ENCODE measurements at regions of chr5 and their contacts with region 1.

Region 1: DNA sequence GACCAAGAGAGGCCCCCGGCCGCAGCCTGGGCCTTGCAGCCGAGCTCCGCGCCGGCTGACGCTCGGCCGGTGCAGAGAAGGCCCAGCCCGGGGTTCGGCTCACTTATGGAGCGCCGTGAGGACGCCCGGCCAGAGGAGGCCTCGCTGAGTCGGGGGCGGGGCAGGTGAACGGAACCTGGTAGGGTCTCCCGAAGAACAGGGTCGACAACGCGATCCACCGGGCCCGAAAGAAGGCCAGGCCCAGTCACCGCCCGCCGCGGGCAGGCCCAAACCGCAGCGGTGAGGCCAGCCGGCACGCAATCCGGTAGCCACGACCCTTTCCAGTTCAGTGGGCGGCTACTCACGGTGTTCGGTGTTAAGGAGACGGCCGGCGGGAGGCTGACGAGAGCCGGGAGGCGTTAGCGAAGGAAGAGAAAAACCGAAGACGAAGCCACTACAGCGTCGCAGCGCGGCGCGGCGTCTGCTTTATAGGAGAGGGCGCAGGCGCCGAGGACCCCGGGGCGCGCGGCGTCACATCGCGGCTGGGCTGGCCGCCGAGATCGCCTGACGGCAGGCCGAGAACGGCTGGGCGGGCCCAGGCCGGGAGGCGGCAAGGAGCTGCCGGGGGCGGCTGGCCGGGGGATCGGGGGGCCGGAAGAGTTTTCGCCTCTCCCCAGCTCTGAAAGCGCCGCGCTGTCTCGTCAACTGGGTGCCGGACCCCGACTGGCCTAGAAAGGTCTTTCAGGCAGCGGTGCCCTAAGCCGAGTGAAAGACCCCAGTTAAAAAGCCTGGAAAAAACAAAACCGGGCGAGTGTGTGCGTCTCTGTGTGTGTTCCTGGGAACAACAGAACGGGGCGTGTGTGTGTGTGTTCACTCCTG is at the start of gene SKP1:
- DNase-seq: peak; percentile 80 to 93 (median 91)
- ATAC-seq: peak; percentile 92
- H3K4me3 ChIP-seq: peak within 1 kb of the TSS; percentile 96
- H3K4me3 Mint-ChIP-seq: peak within 1 kb of the TSS; percentile 90 to 99 (median 97)
- H3K27ac ChIP-seq: peak within 1 kb of the TSS; percentile 100
- H3K27ac Mint-ChIP-seq: peak within 1 kb of the TSS; percentile 98 to 99 (median 98)
- H3K4me1 ChIP-seq: peaks cover 25 to 30% of the 10 kb centered on the region in 2 donors
- H3K4me1 Mint-ChIP-seq: peaks cover 28 to 39% (median 32%) of the 10 kb centered on the region in 7 donors
- H3K27me3 ChIP-seq: no peaks in the 10 kb centered on the region
- H3K27me3 Mint-ChIP-seq: peaks cover 0 to 4% (median 0%) of the 10 kb centered on the region in 5 donors
- total RNA-seq, gene SKP1: 224 to 287 (median 268) TPM

Region 2: DNA sequence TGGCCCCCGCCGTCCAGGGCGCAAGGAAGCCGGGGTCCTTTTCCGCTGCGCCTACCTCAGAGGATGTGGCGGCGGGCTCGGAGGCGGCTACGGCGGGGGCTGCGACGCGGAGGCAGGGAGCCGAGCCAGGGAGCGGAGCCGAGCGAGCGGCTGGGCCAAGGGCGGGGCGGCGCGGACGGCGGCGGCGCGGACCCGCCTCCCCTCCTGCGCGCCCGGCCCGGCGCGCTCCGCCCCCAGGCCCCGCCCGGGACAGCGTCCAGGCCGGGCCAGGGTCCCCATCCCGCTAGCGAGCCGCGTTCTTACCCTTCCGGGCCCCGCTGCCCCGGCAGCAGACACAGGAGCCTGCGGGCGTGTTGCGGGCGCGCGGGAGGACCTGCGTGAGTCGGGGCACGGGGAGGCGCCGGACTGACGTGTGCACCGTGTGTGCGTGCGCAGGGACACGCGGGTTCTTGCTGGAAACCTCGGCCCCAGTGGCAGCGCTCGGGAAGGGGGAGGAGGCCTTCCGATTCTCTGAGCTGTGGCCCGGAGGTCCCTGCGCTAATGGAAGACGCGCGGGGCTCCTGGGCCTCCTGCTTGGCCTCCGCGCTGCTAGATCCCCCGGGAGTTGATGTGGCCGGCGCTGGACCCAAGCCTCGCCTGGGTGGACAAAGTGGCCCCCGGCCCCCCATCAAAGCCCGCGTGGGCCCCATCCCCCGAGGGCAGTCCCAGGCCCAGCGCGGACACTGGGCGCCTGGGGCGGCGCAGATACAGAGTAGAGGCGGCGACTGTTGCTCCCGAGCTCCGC is 172.0 kb before region 1 on chr5 and contains the start of gene VDAC1:
- CTCF ChIA-PET with region 1: no interaction called
- POLR2A ChIA-PET with region 1: interaction called, 9 read pairs
- intact Hi-C with region 1: loop called (anchors 1 kb)
- DNase-seq: peak; percentile 74 to 92 (median 89)
- ATAC-seq: peak; percentile 85
- H3K4me3 ChIP-seq: peak within 1 kb of the TSS; percentile 83
- H3K4me3 Mint-ChIP-seq: peak within 1 kb of the TSS; percentile 89 to 97 (median 92)
- H3K27ac ChIP-seq: peak within 1 kb of the TSS; percentile 98
- H3K27ac Mint-ChIP-seq: peak within 1 kb of the TSS; percentile 86 to 97 (median 96)
- H3K4me1 ChIP-seq: peaks cover 17 to 26% of the 10 kb centered on the region in 2 donors
- H3K4me1 Mint-ChIP-seq: peaks cover 25 to 47% (median 43%) of the 10 kb centered on the region in 7 donors
- H3K27me3 ChIP-seq: no peaks in the 10 kb centered on the region
- H3K27me3 Mint-ChIP-seq: no peaks in the 10 kb centered on the region
- total RNA-seq, gene VDAC1: 37.8 to 259 (median 43.7) TPM

Region 3: GRCh38 chr5:134113902-134114875 is 62.6 kb before region 1 on chr5 and contains the start of gene TCF7:
- CTCF ChIA-PET with region 1: interaction called, 3 read pairs
- POLR2A ChIA-PET with region 1: interaction called, 9 read pairs
- intact Hi-C with region 1: loop called in 1 of 2 experiments (anchors 2 kb)
- DNase-seq: peak; percentile 69 to 87 (median 83)
- ATAC-seq: peak; percentile 89
- H3K4me3 ChIP-seq: peak within 1 kb of the TSS; percentile 93
- H3K4me3 Mint-ChIP-seq: peak within 1 kb of the TSS; percentile 93 to 100 (median 98)
- H3K27ac ChIP-seq: peak within 1 kb of the TSS; percentile 97
- H3K27ac Mint-ChIP-seq: peak within 1 kb of the TSS; percentile 88 to 99 (median 98)
- H3K4me1 ChIP-seq: peaks cover 34 to 63% of the 10 kb centered on the region in 2 donors
- H3K4me1 Mint-ChIP-seq: peaks cover 27 to 67% (median 31%) of the 10 kb centered on the region in 7 donors
- H3K27me3 ChIP-seq: no peaks in the 10 kb centered on the region
- H3K27me3 Mint-ChIP-seq: peaks cover 0 to 43% (median 0%) of the 10 kb centered on the region in 5 donors
- total RNA-seq, gene TCF7: 203 to 1,066 (median 643) TPM

Region 4: GRCh38 chr5:134161513-134162395 is 15.0 kb before region 1 on chr5:
- CTCF ChIA-PET with region 1: no interaction called
- POLR2A ChIA-PET with region 1: interaction called, 164 read pairs
- intact Hi-C with region 1: loop called (anchors 2 kb)
- DNase-seq: no peak
- ATAC-seq: no peak
- H3K4me3 ChIP-seq: no peak overlapping the region
- H3K4me3 Mint-ChIP-seq: no peak overlapping the region
- H3K27ac ChIP-seq: no peak overlapping the region
- H3K27ac Mint-ChIP-seq: peak overlapping the region in 6 of 9 donors; percentile 20 to 78 (median 38)
- H3K4me1 ChIP-seq: peaks cover 0 to 5% of the 10 kb centered on the region in 2 donors
- H3K4me1 Mint-ChIP-seq: peaks cover 13 to 70% (median 49%) of the 10 kb centered on the region in 7 donors
- H3K27me3 ChIP-seq: no peaks in the 10 kb centered on the region
- H3K27me3 Mint-ChIP-seq: no peaks in the 10 kb centered on the region

Region 5: DNA sequence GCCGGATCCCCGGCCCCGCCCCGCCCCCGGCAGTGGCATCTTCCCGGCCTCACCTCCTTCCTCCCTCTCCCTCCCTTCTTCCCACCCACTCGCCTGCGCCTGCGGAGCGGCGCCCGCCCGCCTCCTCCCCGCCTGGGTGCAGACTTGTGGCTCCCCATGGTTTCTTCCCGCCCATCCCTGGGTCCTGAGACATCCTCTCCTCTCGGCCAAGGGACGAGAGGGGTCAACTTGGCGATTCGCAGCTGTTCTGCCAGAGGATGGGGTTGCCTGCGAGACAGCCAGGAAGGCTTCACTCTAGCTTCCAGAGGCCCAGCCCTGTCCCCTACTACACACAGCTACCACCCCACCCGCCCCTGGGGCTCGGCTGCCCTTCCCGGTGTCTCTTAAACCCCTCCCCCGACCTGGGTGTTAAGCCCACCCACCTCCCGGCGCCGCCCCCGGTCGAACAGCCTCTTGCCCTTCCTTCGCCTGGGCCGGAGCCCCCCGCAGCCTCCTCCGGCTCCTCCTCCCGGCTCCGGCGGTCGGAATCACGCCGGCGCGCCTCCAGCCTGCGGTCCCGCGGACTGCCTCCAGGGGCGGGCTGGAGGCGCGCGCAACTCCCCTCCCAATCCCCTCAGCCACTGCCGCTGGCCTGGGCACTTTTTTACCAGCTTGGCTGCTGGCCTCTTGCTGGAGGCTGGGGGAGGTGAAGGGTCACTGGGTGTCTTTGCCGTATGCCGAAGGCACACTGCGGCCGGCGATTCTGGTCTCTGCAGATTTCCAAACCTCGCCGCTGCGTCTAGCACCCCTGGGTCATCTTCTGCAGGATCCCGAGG is 350.6 kb after region 1 on chr5:
- CTCF ChIA-PET with region 1: interaction called, 3 read pairs
- POLR2A ChIA-PET with region 1: interaction called, 5 read pairs
- intact Hi-C with region 1: loop called (anchors 1 to 2 kb)
- DNase-seq: peak; percentile 34 to 82 (median 60)
- ATAC-seq: peak; percentile 45
- H3K4me3 ChIP-seq: peak overlapping the region; percentile 100
- H3K4me3 Mint-ChIP-seq: peak overlapping the region; percentile 91 to 100 (median 98)
- H3K27ac ChIP-seq: peak overlapping the region; percentile 97
- H3K27ac Mint-ChIP-seq: peak overlapping the region; percentile 48 to 99 (median 93)
- H3K4me1 ChIP-seq: peaks cover 43 to 50% of the 10 kb centered on the region in 2 donors
- H3K4me1 Mint-ChIP-seq: peaks cover 37 to 57% (median 52%) of the 10 kb centered on the region in 7 donors
- H3K27me3 ChIP-seq: no peaks in the 10 kb centered on the region
- H3K27me3 Mint-ChIP-seq: no peaks in the 10 kb centered on the region

Region 6: GRCh38 chr5:134758504-134759341 is 582.0 kb after region 1 on chr5 and contains the start of gene DDX46:
- CTCF ChIA-PET with region 1: no interaction called
- POLR2A ChIA-PET with region 1: no interaction called
- intact Hi-C with region 1: loop called in 1 of 2 experiments (anchors 1 kb)
- DNase-seq: peak; percentile 85 to 95 (median 91)
- ATAC-seq: peak; percentile 99
- H3K4me3 ChIP-seq: peak within 1 kb of the TSS; percentile 75
- H3K4me3 Mint-ChIP-seq: peak within 1 kb of the TSS; percentile 92 to 100 (median 99)
- H3K27ac ChIP-seq: peak within 1 kb of the TSS; percentile 87
- H3K27ac Mint-ChIP-seq: peak within 1 kb of the TSS; percentile 93 to 99 (median 97)
- H3K4me1 ChIP-seq: peaks cover 12 to 13% of the 10 kb centered on the region in 2 donors
- H3K4me1 Mint-ChIP-seq: peaks cover 20 to 47% (median 38%) of the 10 kb centered on the region in 7 donors
- H3K27me3 ChIP-seq: no peaks in the 10 kb centered on the region
- H3K27me3 Mint-ChIP-seq: no peaks in the 10 kb centered on the region
- total RNA-seq, gene DDX46: 51.2 to 72.5 (median 64.2) TPM

Measured in naive thymus-derived CD4-positive, alpha-beta T cell (primary cell).